Left cardiac atrium (tissue), 4 donors: ENCODE measurements at regions of chr3 and their contacts with region 1.

Region 1: DNA sequence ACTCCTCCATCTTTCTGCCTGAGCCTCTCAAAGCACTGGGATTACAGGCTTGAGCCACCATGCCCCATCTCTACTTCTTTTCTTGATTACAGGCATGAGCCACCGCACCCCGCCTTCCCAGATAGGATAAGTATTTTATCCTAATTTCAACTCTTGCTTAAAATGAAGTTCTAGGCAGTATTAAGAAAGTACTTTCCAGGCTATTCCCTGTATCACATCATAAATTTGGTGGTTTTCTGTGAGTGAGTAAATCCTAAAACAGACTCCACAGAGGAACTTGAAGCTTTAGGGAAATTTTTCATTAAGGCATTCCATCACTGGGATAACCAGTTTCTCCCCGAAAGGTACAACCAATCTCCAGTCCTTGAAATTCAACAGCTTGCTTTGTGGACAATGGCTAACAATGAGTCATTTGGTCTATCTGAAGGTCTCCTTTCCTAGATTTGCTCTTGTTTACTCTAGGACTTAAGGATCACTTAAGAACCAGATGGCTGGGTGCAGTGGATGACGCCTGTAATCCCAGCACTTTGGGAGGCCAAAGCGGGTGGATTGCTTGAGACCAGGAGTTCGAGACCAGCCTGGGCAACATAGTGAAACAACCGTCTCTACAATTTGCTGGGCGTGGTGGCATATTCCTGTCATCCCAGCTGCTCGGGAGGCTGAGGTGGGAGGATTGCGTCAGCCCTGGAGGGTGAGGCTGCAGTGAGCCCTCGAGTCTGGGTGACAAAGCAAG is 49.7 kb upstream of the SKIL start:
- DNase-seq: no peak
- ATAC-seq: no peak

Region 2: GRCh38 chr3:170357176-170357919 is 49.5 kb after region 1 on chr3 and contains the start of gene SKIL:
- intact Hi-C with region 1: loop called (anchors 5 kb)
- DNase-seq: peak; percentile 99
- ATAC-seq: peak; percentile 85 to 90
- total RNA-seq, gene SKIL: 19.8 to 46.5 TPM

Region 3: DNA sequence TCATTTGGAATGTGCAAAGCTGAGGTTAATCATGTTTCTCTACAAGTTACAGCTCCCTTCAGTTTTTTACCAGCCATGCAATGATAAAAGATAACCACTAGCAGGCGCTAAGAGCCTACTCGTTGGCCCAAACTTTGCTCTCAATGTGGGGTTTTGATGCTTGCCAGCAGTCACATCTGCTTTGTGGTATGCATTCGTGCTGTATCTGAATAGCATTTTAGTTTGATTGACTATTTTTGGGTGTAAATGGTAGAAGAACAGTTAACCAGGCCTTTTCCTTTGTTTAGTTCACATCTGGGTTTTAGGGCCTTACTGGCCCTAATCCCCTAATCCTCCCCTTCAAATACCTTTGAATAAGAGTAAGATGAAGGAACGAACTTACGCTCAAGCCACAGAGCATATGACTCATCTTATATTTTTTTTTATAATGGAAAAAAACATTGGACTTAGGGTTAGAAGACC is 106.4 kb after region 1 on chr3:
- intact Hi-C with region 1: loop called (anchors 2 to 5 kb)
- DNase-seq: no peak
- ATAC-seq: peak; percentile 39 to 47